ENCODE measurements at regions of chr12 and their contacts with region 1.

Region 1: GRCh38 chr12:53005986-53006809 is at the start of gene EIF4B:
- H3K4me3 ChIP-seq: peak within 1 kb of the TSS; percentile 65
- H3K27ac ChIP-seq: peak within 1 kb of the TSS; percentile 94
- H3K4me1 ChIP-seq: peaks cover under 1% of the 10 kb centered on the region
- CTCF ChIP-seq: no peak; the same call in 1 of the 2 replicates

Region 2: GRCh38 chr12:52836042-52836466 is 170.1 kb before region 1 on chr12:
- CTCF ChIA-PET with region 1: no interaction called
- POLR2A ChIA-PET with region 1: no interaction called
- H3K4me3 ChIP-seq: no peak overlapping the region
- H3K27ac ChIP-seq: no peak overlapping the region
- H3K4me1 ChIP-seq: no peaks in the 10 kb centered on the region
- CTCF ChIP-seq: no peak

Region 3: DNA sequence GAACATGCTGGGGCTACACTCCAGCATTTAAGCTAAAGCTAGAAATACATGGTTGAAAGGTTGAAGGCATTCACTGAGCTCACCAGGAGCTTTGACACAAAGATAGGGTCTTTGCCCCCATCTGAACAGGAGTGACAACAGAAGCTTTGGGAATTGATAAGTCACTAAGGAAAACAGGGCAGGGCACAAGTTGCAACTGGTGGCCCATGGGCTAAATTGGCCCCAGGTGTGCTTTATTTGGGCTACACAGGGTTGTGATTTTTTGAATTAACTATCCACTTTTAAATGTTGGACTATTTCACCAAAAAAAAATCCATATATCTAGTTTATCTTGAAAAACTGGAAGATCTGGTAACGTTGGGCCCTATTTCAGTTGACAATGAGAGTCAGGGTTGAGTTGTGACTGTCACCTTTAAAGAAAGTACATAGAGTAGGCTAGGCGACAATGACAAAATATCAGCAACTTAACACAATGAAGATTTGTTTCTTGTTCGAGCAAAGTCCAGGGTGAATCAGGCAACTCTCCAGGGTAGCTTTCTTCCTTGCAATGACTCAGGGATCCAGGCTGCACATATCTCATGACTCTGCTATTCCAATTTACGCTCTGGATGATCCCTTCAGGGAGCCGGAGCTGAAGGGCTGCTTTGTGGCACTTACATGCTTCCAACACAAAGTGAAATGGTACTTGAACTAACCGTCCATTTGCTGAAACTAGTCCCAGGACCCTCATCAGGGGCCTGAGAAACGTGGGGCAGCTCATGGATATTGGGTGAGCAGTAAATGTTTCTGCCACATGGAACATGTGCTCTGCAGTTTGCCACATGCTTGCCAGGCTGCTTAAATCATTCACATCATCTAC is 13.3 kb before region 1 on chr12:
- CTCF ChIA-PET with region 1: no interaction called
- POLR2A ChIA-PET with region 1: interaction called, 12 read pairs
- H3K4me3 ChIP-seq: no peak overlapping the region
- H3K27ac ChIP-seq: no peak overlapping the region
- H3K4me1 ChIP-seq: no peaks in the 10 kb centered on the region; the same call in 1 of the 2 replicates
- CTCF ChIP-seq: no peak

Region 4: GRCh38 chr12:53068811-53069585 is 62.8 kb after region 1 on chr12:
- CTCF ChIA-PET with region 1: no interaction called
- POLR2A ChIA-PET with region 1: no interaction called
- H3K4me3 ChIP-seq: no peak overlapping the region
- H3K27ac ChIP-seq: no peak overlapping the region
- H3K4me1 ChIP-seq: 0 out of 2 replicates have a peak, but pooled peaks cover 2% of the 10 kb centered on the region
- CTCF ChIP-seq: no peak

Measured in HEK293 (cell line).